ENCODE measurements at regions of chr5 and their contacts with region 1.

Region 1: GRCh38 chr5:10283927-10284635 is 23.6 kb downstream of the CMBL start:
- DNase-seq: peak; percentile 84 to 86
- ATAC-seq: peak; percentile 80 to 93 (median 86)
- H3K4me3 ChIP-seq: no peak overlapping the region
- H3K27ac ChIP-seq: no peak overlapping the region
- H3K4me1 ChIP-seq: peaks cover 0 to 16% (median 6%) of the 10 kb centered on the region in 9 donors
- H3K27me3 ChIP-seq: no peaks in the 10 kb centered on the region
- CTCF ChIP-seq: peak; percentile 82 to 98 (median 94)

Region 2: GRCh38 chr5:10201223-10201868 is 82.7 kb before region 1 on chr5:
- intact Hi-C with region 1: no loop called
- DNase-seq: no peak
- ATAC-seq: no peak
- H3K4me3 ChIP-seq: no peak overlapping the region
- H3K27ac ChIP-seq: no peak overlapping the region
- H3K4me1 ChIP-seq: no peaks in the 10 kb centered on the region
- H3K27me3 ChIP-seq: no peaks in the 10 kb centered on the region
- CTCF ChIP-seq: peak in 4 of 9 donors; percentile 16 to 42 (median 26)

Region 3: DNA sequence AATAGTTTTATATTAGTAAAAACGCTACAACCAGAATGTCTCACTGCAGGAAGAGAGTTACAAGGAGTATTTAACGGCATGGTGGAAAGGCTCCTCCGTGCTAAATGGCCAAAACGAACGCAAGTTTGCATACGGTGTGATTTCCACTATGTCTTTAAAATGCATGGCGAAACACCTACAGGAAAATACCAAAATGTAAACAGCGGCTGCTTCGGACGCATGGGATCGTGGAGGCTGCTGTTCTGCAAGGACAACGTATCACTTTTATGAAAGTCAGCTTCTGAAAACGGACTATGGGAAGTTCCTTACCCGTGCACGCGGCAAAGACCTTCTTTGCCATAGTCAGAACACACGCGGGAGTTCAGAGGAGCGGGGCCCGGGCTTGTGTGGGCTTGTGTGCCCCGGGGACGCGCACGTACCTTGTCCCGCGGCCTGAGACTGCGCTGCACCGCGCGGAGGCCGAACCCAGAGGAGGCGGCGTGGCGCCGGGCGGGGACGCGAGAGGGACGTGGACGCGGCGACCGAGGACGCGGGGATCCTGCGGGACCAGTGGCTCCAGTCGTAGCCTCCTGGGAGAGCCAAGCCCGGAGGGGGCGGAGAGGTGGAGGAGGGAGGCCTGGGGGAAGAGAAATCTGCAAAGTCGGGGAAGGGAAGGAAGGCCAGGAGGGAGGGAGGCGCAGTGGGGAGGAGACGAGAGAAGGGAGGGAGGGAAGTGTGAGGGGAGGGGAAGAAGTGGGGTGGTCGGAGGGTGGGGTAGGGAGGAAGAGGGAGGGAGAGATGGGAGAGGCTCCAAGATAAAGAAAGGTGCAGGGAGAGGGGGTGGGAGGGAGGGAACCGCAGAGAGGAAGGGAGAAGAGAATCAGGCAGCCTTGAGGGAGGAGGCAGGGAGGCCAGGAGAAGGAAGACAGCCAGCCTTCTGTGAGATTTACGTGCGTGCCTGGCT is 23.4 kb after region 1 on chr5 and contains the start of gene CMBL:
- intact Hi-C with region 1: no loop called
- DNase-seq: peak; percentile 43 to 60
- ATAC-seq: peak; percentile 71 to 86 (median 81)
- H3K4me3 ChIP-seq: peak within 1 kb of the TSS; percentile 39 to 76 (median 67)
- H3K27ac ChIP-seq: peak within 1 kb of the TSS; percentile 44 to 90 (median 83)
- H3K4me1 ChIP-seq: peaks cover 0 to 42% (median 27%) of the 10 kb centered on the region in 9 donors
- H3K27me3 ChIP-seq: peaks cover 0 to 10% (median 0%) of the 10 kb centered on the region in 7 donors
- CTCF ChIP-seq: no peak
- total RNA-seq, gene CMBL: 32.2 to 53.4 (median 45.3) TPM

Region 4: GRCh38 chr5:10333154-10334006 is 49.3 kb after region 1 on chr5:
- intact Hi-C with region 1: loop called in 1 of 10 experiments (anchors 10 kb)
- DNase-seq: peak in 1 of 2 donors; percentile 59
- ATAC-seq: peak; percentile 54 to 72 (median 63)
- H3K4me3 ChIP-seq: peak overlapping the region; percentile 26 to 86 (median 60)
- H3K27ac ChIP-seq: peak overlapping the region; percentile 46 to 90 (median 82)
- H3K4me1 ChIP-seq: peaks cover 10 to 65% (median 45%) of the 10 kb centered on the region in 9 donors
- H3K27me3 ChIP-seq: peaks cover 0 to 34% (median 13%) of the 10 kb centered on the region in 7 donors
- CTCF ChIP-seq: peak in 6 of 9 donors; percentile 7 to 45 (median 26)

Region 5: GRCh38 chr5:10364186-10364683 is 80.2 kb after region 1 on chr5:
- intact Hi-C with region 1: loop called in 1 of 10 experiments (anchors 5 kb)
- DNase-seq: no peak
- ATAC-seq: peak in 1 of 8 donors; percentile 13
- H3K4me3 ChIP-seq: no peak overlapping the region
- H3K27ac ChIP-seq: no peak overlapping the region
- H3K4me1 ChIP-seq: peaks cover 5 to 85% (median 56%) of the 10 kb centered on the region in 9 donors
- H3K27me3 ChIP-seq: no peaks in the 10 kb centered on the region
- CTCF ChIP-seq: peak in 2 of 9 donors; percentile 18 to 27

Region 6: GRCh38 chr5:10401498-10401897 is 117.4 kb after region 1 on chr5:
- intact Hi-C with region 1: loop called in 2 of 10 experiments (anchors 5 kb)
- DNase-seq: no peak
- ATAC-seq: peak in 1 of 8 donors; percentile 40
- H3K4me3 ChIP-seq: no peak overlapping the region
- H3K27ac ChIP-seq: peak overlapping the region in 3 of 10 donors; percentile 29 to 52 (median 34)
- H3K4me1 ChIP-seq: peaks cover 0 to 23% (median 17%) of the 10 kb centered on the region in 9 donors
- H3K27me3 ChIP-seq: no peaks in the 10 kb centered on the region
- CTCF ChIP-seq: no peak

Region 7: GRCh38 chr5:10424124-10424731 is 140.1 kb after region 1 on chr5:
- intact Hi-C with region 1: loop called (anchors 1 to 10 kb)
- DNase-seq: no peak
- ATAC-seq: peak in 7 of 8 donors; percentile 28 to 78 (median 56)
- H3K4me3 ChIP-seq: no peak overlapping the region
- H3K27ac ChIP-seq: no peak overlapping the region
- H3K4me1 ChIP-seq: peaks cover 0 to 24% (median 0%) of the 10 kb centered on the region in 9 donors
- H3K27me3 ChIP-seq: no peaks in the 10 kb centered on the region
- CTCF ChIP-seq: peak in 8 of 9 donors; percentile 13 to 66 (median 60)

Region 8: GRCh38 chr5:10627160-10627701 is 343.1 kb after region 1 on chr5:
- intact Hi-C with region 1: loop called in 4 of 10 experiments (anchors 5 to 10 kb)
- DNase-seq: no peak
- ATAC-seq: peak in 5 of 8 donors; percentile 5 to 29 (median 17)
- H3K4me3 ChIP-seq: peak overlapping the region in 9 of 10 donors; percentile 6 to 37 (median 32)
- H3K27ac ChIP-seq: peak overlapping the region in 7 of 10 donors; percentile 3 to 69 (median 36)
- H3K4me1 ChIP-seq: peaks cover 9 to 48% (median 33%) of the 10 kb centered on the region in 9 donors
- H3K27me3 ChIP-seq: peaks cover 0 to 6% (median 0%) of the 10 kb centered on the region in 7 donors
- CTCF ChIP-seq: no peak